Right ventricle myocardium inferior (tissue), 1 donor: ENCODE measurements at regions of chr11 and their contacts with region 1.

Region 1: DNA sequence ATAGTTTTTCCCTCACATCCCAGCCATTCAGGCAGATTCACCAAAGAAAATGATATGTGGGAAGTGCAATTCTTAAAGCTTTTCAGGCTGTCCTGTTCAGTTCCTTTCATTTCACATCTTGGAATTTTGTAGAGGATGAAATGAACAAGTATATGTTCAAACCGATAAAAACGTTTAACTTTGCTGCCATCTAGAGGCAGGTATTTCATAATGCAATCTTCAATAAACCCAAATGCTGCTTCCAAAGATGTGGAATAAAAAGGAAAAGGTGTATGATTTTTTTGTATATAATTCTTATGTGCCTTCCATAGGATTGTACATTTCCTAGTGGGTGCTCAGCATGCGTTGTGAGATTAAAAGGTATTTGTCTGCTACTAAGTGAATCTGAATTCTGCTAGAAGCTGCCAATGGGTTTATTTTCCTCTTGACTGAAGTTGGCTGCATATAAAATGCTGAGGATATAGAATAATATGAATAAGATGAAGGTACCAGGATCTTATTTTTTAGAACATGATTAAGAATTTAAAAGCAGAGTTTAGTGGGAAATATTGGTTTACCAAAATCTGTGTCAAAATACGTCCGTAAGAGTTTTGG is 199.3 kb downstream of the PGR start:
- DNase-seq: no peak
- ATAC-seq: peak; percentile 42

Region 2: GRCh38 chr11:100575870-100576705 is 354.2 kb before region 1 on chr11:
- intact Hi-C with region 1: loop called (anchors 2 kb)
- DNase-seq: no peak
- ATAC-seq: peak; percentile 79

Region 3: DNA sequence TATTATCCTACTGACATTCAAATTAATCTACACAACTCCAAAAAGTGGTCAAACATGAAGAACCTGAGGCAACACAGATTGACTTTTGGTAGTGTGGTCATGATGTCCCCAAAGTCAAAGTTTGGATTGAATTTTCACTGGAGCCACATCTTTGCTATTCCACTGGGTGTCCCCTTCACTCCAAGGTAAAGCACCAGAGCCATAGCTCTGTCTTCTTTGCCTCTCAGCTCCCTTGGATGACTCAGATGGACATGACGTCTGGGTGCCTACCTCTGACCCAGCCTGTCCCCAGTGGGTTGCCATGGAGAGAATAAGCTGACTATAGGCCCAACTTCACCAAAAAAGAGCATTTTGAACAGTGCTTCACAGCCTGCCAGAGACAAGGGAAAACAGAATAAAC is 300.6 kb before region 1 on chr11:
- intact Hi-C with region 1: no loop called
- DNase-seq: no peak
- ATAC-seq: no peak

Region 4: GRCh38 chr11:100681064-100681502 is 249.2 kb before region 1 on chr11:
- intact Hi-C with region 1: loop called (anchors 5 kb)
- DNase-seq: peak; percentile 75
- ATAC-seq: peak; percentile 69

Region 5: DNA sequence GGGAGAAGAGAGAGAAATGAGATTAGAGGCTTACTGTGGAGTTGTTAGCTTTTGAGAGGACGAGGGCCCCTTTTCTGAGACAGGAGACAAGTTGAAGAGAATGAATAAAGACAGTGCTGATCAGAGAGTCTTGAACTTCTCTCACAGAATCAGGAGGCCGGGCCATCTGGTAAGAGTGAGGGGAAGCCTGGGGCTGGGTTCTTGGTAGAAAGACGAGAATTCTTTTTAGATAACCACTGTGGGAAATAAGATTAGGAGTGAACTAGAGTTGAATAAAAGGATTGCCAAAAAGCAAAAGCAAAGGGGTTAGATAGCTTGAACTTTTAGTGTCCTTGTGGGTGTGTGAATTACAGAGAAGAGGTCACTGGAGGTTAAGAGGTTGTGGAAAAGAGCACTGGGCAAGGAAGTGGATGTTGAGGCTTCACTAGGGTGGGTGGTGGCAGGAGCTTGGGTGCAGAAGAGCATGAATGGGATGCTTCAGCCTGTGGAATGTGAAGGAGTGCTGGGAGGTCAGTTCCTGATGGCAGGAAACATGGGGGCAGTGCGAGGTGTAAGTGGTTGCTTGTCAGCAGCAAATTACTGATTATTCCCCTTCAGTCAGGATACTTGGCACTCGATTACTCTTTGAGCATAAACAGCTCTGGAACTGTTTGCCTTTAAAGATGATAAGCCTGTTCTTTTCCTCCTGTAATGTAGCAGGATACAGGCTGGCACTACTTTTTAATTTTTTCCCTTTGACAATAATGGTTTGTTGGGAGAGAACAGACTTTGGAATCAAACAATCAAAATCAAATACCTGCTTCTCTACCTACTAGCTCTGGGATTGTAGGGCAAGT is 144.9 kb before region 1 on chr11:
- intact Hi-C with region 1: no loop called
- DNase-seq: no peak
- ATAC-seq: peak; percentile 91

Region 6: DNA sequence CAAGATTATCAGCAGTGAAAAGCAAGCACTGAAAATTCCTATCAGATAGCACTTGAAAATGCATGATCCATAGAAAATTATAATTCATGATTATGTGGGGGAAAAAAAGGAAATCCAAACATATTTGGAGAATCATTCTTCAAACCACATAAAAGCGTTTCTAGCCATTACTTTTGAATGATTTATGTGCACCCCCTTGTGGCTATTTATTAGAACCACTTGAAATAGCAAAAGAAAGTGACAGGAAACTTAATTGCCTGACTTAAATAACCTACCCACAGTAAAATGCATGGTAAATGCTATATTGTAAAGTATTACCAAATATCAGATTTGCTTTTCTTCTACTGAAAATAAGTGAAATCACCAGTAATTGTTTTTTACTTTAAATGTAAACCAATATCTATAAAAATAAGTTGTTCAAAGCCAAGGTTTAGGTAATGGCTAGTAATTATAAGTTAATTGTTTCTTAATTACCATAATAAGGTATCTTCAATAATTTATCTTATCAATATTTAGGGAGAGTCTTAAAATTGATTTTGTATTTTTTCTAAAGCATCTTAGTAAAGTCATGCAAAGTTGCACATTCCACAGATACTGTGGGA is 74.7 kb before region 1 on chr11:
- intact Hi-C with region 1: loop called (anchors 5 kb)
- DNase-seq: no peak
- ATAC-seq: no peak

Region 7: GRCh38 chr11:100961633-100962032 is 31.4 kb after region 1 on chr11:
- intact Hi-C with region 1: no loop called
- DNase-seq: no peak
- ATAC-seq: no peak